Heart left ventricle (tissue), 16 donors: ENCODE measurements at regions of chr4 and their contacts with region 1.

Region 1: GRCh38 chr4:54473077-54473545 is 184.6 kb upstream of the KIT start:
- DNase-seq: no peak
- ATAC-seq: no peak
- H3K4me3 ChIP-seq: no peak overlapping the region
- H3K27ac ChIP-seq: no peak overlapping the region
- H3K4me1 ChIP-seq: no peaks in the 10 kb centered on the region
- H3K27me3 ChIP-seq: no peaks in the 10 kb centered on the region
- CTCF ChIP-seq: no peak
- POLR2A ChIP-seq: no peak

Region 2: GRCh38 chr4:54400802-54401201 is 72.3 kb before region 1 on chr4:
- intact Hi-C with region 1: no loop called
- DNase-seq: no peak
- ATAC-seq: peak in 2 of 4 donors; percentile 57 to 61
- H3K4me3 ChIP-seq: no peak overlapping the region
- H3K27ac ChIP-seq: no peak overlapping the region
- H3K4me1 ChIP-seq: peaks cover 0 to 20% (median 0%) of the 10 kb centered on the region in 12 donors
- H3K27me3 ChIP-seq: no peaks in the 10 kb centered on the region
- CTCF ChIP-seq: no peak
- POLR2A ChIP-seq: no peak

Region 3: DNA sequence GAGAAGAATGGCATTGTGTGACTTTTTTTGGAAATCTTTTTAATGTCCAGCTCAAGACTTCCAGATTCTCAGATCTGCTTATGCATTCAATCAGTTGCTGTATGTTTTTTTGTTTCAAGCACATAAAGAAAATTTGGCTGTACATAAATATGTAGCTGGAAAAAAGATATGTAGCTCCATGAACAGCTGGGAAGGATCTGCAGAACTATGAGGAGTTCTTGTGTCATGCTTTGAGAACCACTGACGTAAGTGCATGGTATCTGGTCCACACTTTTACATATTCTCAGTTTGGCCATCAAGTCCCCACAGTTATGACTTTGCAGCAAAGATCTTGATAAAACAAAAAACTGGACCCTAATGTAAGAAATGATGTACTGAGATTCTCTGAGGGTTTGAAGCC is 350.5 kb after region 1 on chr4:
- intact Hi-C with region 1: loop called in 1 of 10 experiments (anchors 10 kb)
- DNase-seq: no peak
- ATAC-seq: no peak
- H3K4me3 ChIP-seq: no peak overlapping the region
- H3K27ac ChIP-seq: no peak overlapping the region
- H3K4me1 ChIP-seq: no peaks in the 10 kb centered on the region
- H3K27me3 ChIP-seq: no peaks in the 10 kb centered on the region
- CTCF ChIP-seq: no peak
- POLR2A ChIP-seq: no peak